ENCODE measurements at regions of chr13 and their contacts with region 1.

Region 1: DNA sequence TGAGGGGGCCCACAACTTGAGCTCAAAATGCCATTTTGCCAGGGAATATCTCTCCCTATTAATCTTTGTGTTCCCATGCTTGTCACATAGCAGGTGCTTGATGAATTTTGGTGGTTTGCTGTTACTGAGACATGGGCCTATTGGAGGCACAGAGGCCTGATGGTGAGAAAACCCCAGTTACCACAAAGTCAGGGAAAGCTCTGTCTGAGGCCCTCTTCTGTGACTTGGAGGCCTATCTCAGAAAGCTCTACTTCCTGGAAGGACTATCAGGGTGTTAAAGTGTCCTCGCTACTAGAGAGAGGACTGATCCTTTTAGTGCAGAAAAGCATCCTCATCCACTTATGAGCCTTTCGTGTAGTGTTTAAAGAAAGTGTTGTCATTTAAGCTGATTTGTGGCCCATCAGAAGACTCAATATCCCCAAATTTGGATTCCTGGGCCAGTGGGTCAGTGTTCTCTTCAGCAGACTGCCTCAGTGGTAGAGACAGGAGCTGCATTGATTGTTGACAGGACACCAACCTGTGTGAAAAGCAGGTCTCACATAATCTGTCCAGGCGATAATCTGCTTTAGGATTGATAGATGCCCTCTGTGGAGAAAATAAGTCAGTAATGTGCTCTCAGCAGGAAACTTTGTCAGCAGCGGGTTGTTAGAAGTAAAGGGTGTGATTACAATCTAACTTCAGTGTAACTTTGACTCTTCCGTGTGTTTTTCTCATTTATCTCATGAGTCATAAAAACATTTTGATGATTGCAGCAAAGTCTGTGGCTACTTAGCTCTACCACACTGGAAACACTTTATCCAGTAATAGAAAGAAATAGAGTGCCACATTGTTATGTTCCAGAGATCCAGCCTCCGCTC is 121.0 kb downstream of the AKAP11 start:
- DNase-seq: peak; percentile 61
- ATAC-seq: peak; percentile 65
- H3K4me3 Mint-ChIP-seq: peak overlapping the region; percentile 49
- H3K27ac Mint-ChIP-seq: peak overlapping the region; percentile 96
- H3K4me1 Mint-ChIP-seq: peaks cover 83% of the 10 kb centered on the region
- H3K27me3 Mint-ChIP-seq: no peaks in the 10 kb centered on the region

Region 2: GRCh38 chr13:41788552-41788951 is 604.4 kb before region 1 on chr13:
- CTCF ChIA-PET with region 1: no interaction called
- POLR2A ChIA-PET with region 1: no interaction called
- DNase-seq: no peak
- ATAC-seq: no peak
- H3K4me3 Mint-ChIP-seq: no peak overlapping the region
- H3K27ac Mint-ChIP-seq: no peak overlapping the region
- H3K4me1 Mint-ChIP-seq: no peaks in the 10 kb centered on the region
- H3K27me3 Mint-ChIP-seq: no peaks in the 10 kb centered on the region

Region 3: GRCh38 chr13:42354241-42355091 is 38.5 kb before region 1 on chr13:
- CTCF ChIA-PET with region 1: interaction called, 11 read pairs
- POLR2A ChIA-PET with region 1: interaction called, 8 read pairs
- DNase-seq: peak; percentile 70
- ATAC-seq: peak; percentile 74
- H3K4me3 Mint-ChIP-seq: peak overlapping the region; percentile 54
- H3K27ac Mint-ChIP-seq: peak overlapping the region; percentile 96
- H3K4me1 Mint-ChIP-seq: peaks cover 45% of the 10 kb centered on the region
- H3K27me3 Mint-ChIP-seq: no peaks in the 10 kb centered on the region

Region 4: DNA sequence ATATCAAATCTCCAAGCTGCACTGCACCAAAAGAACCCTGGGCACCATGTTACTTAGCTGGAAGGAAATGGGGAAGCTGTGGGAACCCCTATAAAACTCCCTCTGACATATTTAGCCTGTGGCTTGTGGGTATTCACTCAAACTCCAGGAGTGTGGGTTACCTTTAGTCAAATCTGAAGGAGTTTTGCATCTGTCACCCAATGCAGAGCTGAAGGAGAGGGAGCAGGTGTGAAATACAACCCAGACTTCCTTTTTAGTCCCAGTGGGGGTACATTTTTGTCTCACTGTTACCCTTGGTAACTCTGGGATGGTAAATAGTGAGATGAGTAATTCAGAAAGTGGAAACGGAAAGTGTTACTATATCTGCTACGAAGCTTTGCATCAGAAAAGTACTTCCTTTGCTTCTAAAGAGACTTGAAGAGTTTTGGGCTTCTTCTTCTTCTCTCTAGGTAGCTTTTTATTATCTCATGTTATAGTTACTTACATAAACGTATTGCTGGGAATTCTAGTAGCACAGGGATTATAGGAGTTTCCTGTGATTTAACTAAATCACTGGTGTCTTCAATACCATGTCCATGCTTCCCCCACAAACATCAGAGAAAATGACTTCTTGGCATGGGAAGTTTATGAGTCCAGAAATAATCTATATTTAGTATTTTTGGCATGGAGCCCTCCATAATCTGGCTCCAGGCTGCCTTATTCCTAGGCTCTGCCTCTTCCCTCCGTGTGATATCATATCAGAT is 15.1 kb before region 1 on chr13:
- CTCF ChIA-PET with region 1: interaction called, 58 read pairs
- POLR2A ChIA-PET with region 1: interaction called, 21 read pairs
- DNase-seq: peak; percentile 65
- ATAC-seq: peak; percentile 82
- H3K4me3 Mint-ChIP-seq: peak overlapping the region; percentile 30
- H3K27ac Mint-ChIP-seq: peak overlapping the region; percentile 84
- H3K4me1 Mint-ChIP-seq: peaks cover 74% of the 10 kb centered on the region
- H3K27me3 Mint-ChIP-seq: no peaks in the 10 kb centered on the region

Region 5: GRCh38 chr13:42478531-42479156 is 85.7 kb after region 1 on chr13:
- CTCF ChIA-PET with region 1: interaction called, 15 read pairs
- POLR2A ChIA-PET with region 1: interaction called, 6 read pairs
- DNase-seq: peak; percentile 27
- ATAC-seq: no peak
- H3K4me3 Mint-ChIP-seq: no peak overlapping the region
- H3K27ac Mint-ChIP-seq: no peak overlapping the region
- H3K4me1 Mint-ChIP-seq: peaks cover 10% of the 10 kb centered on the region
- H3K27me3 Mint-ChIP-seq: no peaks in the 10 kb centered on the region